AG04450 (cell line): ENCODE measurements at regions of chr2 and their contacts with region 1.

Region 1: GRCh38 chr2:23199115-23199918 is 185.7 kb upstream of the KLHL29 start:
- DNase-seq: no peak
- H3K4me3 ChIP-seq: no peak overlapping the region
- H3K27ac ChIP-seq: no peak overlapping the region
- H3K27me3 ChIP-seq: no peaks in the 10 kb centered on the region
- CTCF ChIP-seq: peak; percentile 71

Region 2: DNA sequence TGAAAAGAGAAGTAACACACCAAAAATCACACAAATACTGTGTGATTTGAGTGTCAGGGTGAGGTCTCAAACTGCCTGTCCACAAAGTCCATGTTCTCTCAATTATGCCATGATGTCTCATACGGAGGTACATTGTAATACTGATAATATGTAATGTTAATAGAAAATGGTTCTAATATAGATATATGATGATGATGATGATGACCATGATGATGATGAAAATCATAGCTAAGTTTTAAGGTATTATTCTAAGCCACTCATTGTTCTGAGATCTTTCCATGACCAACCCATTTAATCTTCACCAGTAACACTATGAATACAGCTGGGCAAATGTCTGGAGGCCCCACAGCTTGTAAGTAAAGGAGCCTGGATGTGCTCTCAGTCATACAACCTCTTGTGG is 10.7 kb before region 1 on chr2:
- CTCF ChIA-PET with region 1: interaction called, 23 read pairs
- POLR2A ChIA-PET with region 1: no interaction called
- DNase-seq: no peak
- H3K4me3 ChIP-seq: no peak overlapping the region
- H3K27ac ChIP-seq: no peak overlapping the region
- H3K27me3 ChIP-seq: no peaks in the 10 kb centered on the region
- CTCF ChIP-seq: no peak

Region 3: GRCh38 chr2:23235292-23235691 is 36.0 kb after region 1 on chr2:
- CTCF ChIA-PET with region 1: no interaction called
- POLR2A ChIA-PET with region 1: no interaction called
- DNase-seq: no peak
- H3K4me3 ChIP-seq: no peak overlapping the region
- H3K27ac ChIP-seq: no peak overlapping the region
- H3K27me3 ChIP-seq: no peaks in the 10 kb centered on the region
- CTCF ChIP-seq: no peak

Region 4: DNA sequence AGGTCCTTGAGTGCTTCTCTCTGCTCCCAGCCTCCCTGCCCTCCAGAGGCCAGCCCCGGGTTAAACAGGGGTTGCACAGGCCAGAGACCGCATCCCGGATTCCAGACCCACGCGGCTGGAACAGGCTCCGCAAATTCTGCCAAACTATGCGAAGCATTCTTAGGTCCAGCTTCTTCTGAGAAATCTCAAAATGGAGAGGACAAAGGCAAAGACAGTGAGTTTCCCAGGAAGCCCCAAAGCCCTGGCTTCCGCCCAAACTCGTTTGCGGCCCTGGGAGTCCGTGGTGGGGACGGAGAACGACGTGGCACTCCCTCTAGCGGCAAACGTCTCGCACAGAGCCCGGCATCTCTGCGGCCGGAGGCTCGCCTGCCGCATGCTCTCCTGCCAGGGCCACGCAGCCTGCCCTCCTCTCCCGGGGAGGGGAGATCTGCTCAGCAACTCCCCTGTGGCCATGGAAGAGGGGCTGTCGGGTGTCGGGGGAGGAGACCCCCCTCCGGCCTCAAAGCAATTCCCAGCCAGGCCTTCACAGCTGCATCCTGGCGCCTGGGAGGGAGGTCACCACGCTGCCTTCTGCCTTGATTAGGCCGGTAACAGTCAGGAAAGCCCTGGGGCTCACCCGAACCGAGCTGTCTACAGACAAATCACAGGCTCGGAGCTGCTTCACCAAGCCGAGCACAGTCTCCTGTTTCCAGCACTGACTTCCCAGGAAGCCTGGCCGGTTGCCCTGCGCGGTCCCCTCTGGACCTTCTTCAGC is 152.2 kb after region 1 on chr2:
- CTCF ChIA-PET with region 1: interaction called, 14 read pairs
- POLR2A ChIA-PET with region 1: no interaction called
- DNase-seq: peak; percentile 30
- H3K4me3 ChIP-seq: no peak overlapping the region; the same call in 1 of the 2 replicates
- H3K27ac ChIP-seq: no peak overlapping the region
- H3K27me3 ChIP-seq: peaks cover 9% of the 10 kb centered on the region
- CTCF ChIP-seq: peak; percentile 87

Region 5: DNA sequence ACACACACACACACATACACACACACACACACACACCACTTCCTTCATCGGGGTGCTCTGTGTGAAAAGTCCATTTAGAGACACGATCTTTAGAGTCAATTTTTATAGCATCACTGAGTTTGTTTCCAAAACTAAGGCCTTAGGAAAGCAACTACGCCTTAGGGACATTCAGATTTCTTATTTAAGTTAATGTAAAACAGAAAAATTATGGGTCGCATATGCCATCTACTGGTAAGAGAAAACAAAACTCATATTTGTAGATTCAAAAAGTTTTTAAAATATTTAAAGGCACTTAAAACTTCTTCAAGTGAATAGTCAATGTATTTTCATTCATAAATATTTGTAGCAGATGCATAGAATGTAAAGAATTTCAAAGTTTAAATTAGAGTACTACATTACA is 561.4 kb after region 1 on chr2:
- CTCF ChIA-PET with region 1: interaction called, 12 read pairs
- POLR2A ChIA-PET with region 1: no interaction called
- DNase-seq: peak; percentile 43
- H3K4me3 ChIP-seq: no peak overlapping the region
- H3K27ac ChIP-seq: no peak overlapping the region
- H3K27me3 ChIP-seq: no peaks in the 10 kb centered on the region
- CTCF ChIP-seq: peak; percentile 47